ENCODE measurements at regions of chr7 and their contacts with region 1.

Region 1: DNA sequence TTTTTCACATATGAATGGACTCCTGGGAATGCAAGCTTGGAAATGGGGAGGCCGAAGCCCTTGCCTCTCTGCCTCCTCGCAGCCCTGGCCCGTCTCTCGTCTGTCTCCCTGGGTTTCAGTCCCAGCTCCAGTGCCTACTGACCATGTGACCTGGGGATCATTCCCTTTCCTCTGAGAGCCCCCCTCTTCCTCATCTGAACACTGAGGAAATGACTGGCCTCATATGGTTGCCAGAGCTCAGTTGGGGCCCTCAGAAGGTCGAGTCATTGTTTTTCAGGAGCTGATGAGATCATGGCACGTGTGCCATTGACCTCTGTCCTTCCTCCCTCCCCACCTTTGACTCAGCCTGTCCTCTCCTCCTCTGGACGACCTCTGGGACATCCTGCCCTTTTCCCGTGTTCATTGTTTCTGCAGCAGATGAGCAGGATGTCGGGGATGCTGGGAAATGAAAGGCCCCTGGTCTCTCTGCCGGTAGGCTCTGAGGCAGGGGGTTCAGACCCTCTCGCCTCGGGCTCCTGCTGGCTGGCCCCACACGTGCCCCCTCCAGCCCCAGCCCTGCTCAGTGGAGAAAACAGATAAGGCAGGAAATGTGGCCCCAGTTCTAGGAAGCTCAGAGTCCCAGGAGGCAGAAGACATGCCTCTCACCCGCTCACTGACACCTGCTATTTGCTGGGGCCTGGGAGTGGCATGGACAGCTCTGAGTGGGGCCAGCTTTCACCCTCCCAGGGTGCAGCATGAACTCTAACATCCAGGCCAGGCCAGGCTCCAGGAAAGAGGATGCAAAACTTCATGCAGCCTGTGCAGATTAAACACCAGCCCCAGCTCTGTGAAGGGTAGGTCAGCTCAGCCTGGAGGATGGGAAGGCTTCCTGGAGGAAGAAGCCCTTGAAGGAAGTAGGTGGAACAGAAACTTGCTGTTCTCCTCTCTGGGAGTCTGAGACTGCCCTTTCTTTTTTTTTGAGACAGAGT is 8.3 kb upstream of the PPP1R35 start:
- DNase-seq: peak; percentile 81 to 90 (median 84)
- ATAC-seq: peak; percentile 84
- H3K4me3 ChIP-seq: no peak overlapping the region
- H3K27ac ChIP-seq: peak overlapping the region; percentile 91
- H3K4me1 ChIP-seq: peaks cover 29 to 49% of the 10 kb centered on the region in 2 experiments
- H3K27me3 ChIP-seq: no peaks in the 10 kb centered on the region
- CTCF ChIP-seq: no peak
- EP300 ChIP-seq: peak; percentile 26
- POLR2A ChIP-seq: peak; percentile 70
- RAD21 ChIP-seq: no peak

Region 2: DNA sequence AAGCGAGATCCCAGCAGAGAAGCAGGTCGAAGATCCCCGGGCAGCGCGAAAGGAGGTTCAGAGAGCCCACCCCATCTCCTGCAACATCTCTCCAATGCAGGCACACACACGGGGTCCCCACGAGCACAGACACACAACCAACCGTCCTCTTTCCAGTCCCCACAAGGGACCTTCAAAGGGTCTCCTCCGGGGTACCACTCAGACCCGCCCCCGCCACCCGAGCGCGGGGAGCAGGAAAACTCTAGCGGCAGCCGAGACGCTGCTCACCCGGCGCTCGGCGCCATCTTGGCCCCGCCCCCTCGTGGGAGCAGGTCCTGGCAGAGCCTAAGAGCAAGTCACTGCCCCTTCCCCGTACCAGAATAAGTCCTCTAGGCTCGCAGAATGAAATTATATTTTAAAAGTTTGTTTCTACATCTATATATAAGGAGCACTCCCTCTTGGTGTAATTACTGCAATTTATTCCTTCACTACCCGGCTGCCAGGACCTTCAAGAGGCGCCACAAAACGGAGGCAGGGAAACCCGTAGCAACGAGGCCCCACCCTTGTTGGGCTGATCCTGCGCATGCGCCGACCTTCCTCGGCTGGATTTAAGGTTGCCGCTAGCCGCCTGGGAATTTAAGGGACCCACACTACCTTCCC is 325.4 kb before region 1 on chr7 and contains the starts of genes CNPY4 and TAF6:
- CTCF ChIA-PET with region 1: no interaction called
- POLR2A ChIA-PET with region 1: no interaction called
- in situ Hi-C with region 1: no loop called
- intact Hi-C with region 1: no loop called
- DNase-seq: peak; percentile 99 to 100 (median 99)
- ATAC-seq: peak; percentile 88
- H3K4me3 ChIP-seq: peak within 1 kb of the TSS; percentile 72
- H3K27ac ChIP-seq: peak within 1 kb of the TSS; percentile 88
- H3K4me1 ChIP-seq: peaks cover 20 to 38% of the 10 kb centered on the region in 2 experiments; a peak in 4 of 5 replicates
- H3K27me3 ChIP-seq: no peaks in the 10 kb centered on the region
- CTCF ChIP-seq: no peak; a peak in 1 of 6 replicates
- EP300 ChIP-seq: no peak; the same call in 1 of the 2 replicates
- POLR2A ChIP-seq: peak; percentile 93
- RAD21 ChIP-seq: no peak
- polyA plus RNA-seq, gene CNPY4: 1.9 to 6.3 TPM
- polyA plus RNA-seq, gene TAF6: 0.78 to 0.83 TPM

Region 3: DNA sequence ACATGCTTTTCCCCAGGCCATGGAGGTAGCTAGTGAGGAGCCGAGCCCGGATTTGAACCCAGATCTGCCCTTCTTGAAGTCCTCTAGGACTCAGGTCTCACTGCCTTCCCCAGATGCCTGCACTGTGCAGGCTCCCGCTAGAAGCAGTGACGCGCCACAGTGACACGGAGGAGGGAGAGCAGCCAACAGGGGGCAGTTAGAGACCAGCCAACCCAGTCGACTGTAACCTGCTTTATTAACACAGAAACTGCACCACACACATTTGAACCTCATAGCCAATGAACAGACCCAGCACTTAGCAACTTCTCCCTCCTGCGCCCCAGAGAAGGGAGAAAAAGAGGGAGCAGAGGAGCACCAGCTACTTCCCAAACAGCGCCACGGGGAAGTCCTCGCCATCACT is 43.9 kb before region 1 on chr7:
- CTCF ChIA-PET with region 1: interaction called, 10 read pairs
- POLR2A ChIA-PET with region 1: interaction called, 3 read pairs
- in situ Hi-C with region 1: no loop called
- intact Hi-C with region 1: no loop called
- DNase-seq: peak; percentile 61 to 85 (median 74)
- ATAC-seq: peak; percentile 99
- H3K4me3 ChIP-seq: no peak overlapping the region
- H3K27ac ChIP-seq: no peak overlapping the region
- H3K4me1 ChIP-seq: peaks cover 0 to 14% of the 10 kb centered on the region in 2 experiments; a peak in 2 of 5 replicates
- H3K27me3 ChIP-seq: peaks cover 2 to 9% of the 10 kb centered on the region in 2 experiments; a peak in 4 of 5 replicates
- CTCF ChIP-seq: peak; percentile 95 to 97 (median 97)
- EP300 ChIP-seq: no peak
- POLR2A ChIP-seq: no peak
- RAD21 ChIP-seq: peak; percentile 66 to 92

Region 4: GRCh38 chr7:100455206-100455605 is 10.6 kb after region 1 on chr7:
- CTCF ChIA-PET with region 1: no interaction called
- POLR2A ChIA-PET with region 1: interaction called, 10 read pairs
- in situ Hi-C with region 1: no loop called
- intact Hi-C with region 1: no loop called
- DNase-seq: no peak
- ATAC-seq: no peak
- H3K4me3 ChIP-seq: no peak overlapping the region
- H3K27ac ChIP-seq: no peak overlapping the region
- H3K4me1 ChIP-seq: peaks cover 3 to 23% of the 10 kb centered on the region in 2 experiments; a peak in 3 of 5 replicates
- H3K27me3 ChIP-seq: no peaks in the 10 kb centered on the region
- CTCF ChIP-seq: no peak
- EP300 ChIP-seq: no peak
- POLR2A ChIP-seq: no peak
- RAD21 ChIP-seq: no peak

Measured in K562 (cell line).